ENCODE measurements at regions of chr5 and their contacts with region 1.

Region 1: GRCh38 chr5:87780831-87781760 is 368.4 kb upstream of the CCNH start:
- DNase-seq: peak; percentile 93
- ATAC-seq: peak; percentile 100
- H3K4me3 ChIP-seq: peak overlapping the region; percentile 38; the same call in 1 of the 2 replicates
- H3K27ac ChIP-seq: no peak overlapping the region
- H3K4me1 ChIP-seq: 0 out of 2 replicates have a peak, but pooled peaks cover 4% of the 10 kb centered on the region
- H3K27me3 ChIP-seq: no peaks in the 10 kb centered on the region
- CTCF ChIP-seq: peak; percentile 97

Region 2: DNA sequence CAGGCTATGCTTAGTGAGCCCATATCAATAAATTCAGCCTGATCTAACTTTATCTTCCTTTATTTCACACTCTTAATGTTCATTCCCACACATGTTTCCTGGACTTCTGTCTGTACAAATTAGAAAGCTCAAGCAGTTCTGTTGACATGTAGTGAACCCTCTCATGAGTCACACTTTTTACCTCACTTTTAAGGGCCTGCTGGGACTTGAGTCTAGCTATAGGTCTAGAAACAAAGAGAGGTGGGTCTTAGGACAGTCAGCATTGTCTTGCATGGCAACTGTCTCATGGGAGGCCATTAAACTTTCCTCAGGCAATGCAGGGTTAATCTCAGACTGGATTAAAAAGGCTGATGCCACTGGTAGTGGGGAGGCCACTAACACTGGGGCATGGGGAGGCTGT is 359.8 kb before region 1 on chr5:
- CTCF ChIA-PET with region 1: no interaction called
- POLR2A ChIA-PET with region 1: no interaction called
- intact Hi-C with region 1: loop called (anchors 2 kb)
- DNase-seq: no peak
- ATAC-seq: no peak
- H3K4me3 ChIP-seq: no peak overlapping the region
- H3K27ac ChIP-seq: no peak overlapping the region
- H3K4me1 ChIP-seq: peaks cover 16% of the 10 kb centered on the region
- H3K27me3 ChIP-seq: no peaks in the 10 kb centered on the region
- CTCF ChIP-seq: no peak

Region 3: GRCh38 chr5:87526131-87526530 is 255.0 kb before region 1 on chr5:
- CTCF ChIA-PET with region 1: no interaction called
- POLR2A ChIA-PET with region 1: no interaction called
- intact Hi-C with region 1: no loop called
- DNase-seq: no peak
- ATAC-seq: no peak
- H3K4me3 ChIP-seq: no peak overlapping the region
- H3K27ac ChIP-seq: no peak overlapping the region
- H3K4me1 ChIP-seq: no peaks in the 10 kb centered on the region
- H3K27me3 ChIP-seq: no peaks in the 10 kb centered on the region
- CTCF ChIP-seq: no peak

Region 4: DNA sequence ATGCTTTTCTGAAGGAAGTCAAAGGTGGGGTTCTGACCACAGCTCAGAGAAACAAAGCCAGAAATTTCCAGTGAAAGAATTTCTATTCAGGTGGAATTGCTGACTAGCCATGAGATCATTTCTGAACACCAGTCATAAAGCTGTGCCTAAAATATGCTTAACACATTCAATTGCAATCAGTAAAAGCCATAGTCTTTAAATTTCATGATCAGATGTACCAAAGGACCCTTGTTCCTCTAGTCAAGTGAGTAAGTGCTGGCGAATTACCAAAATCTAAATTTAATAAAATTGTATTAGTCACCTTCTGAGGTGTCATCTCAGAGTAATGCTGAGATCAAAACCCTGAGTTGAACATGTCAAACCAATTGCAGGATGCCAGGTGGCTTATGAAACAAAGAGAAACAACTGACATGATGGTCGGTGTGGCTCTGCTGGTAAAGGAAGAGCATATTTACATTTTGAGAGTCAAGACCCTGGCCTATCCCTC is 34.2 kb before region 1 on chr5:
- CTCF ChIA-PET with region 1: no interaction called
- POLR2A ChIA-PET with region 1: no interaction called
- intact Hi-C with region 1: no loop called
- DNase-seq: peak; percentile 100
- ATAC-seq: peak; percentile 86
- H3K4me3 ChIP-seq: no peak overlapping the region; the same call in 1 of the 2 replicates
- H3K27ac ChIP-seq: peak overlapping the region; percentile 78
- H3K4me1 ChIP-seq: peaks cover 39% of the 10 kb centered on the region
- H3K27me3 ChIP-seq: no peaks in the 10 kb centered on the region
- CTCF ChIP-seq: no peak

Region 5: GRCh38 chr5:87844447-87844846 is 63.4 kb after region 1 on chr5:
- CTCF ChIA-PET with region 1: interaction called, 3 read pairs
- POLR2A ChIA-PET with region 1: no interaction called
- intact Hi-C with region 1: loop called (anchors 1 kb)
- DNase-seq: peak; percentile 31
- ATAC-seq: peak; percentile 59
- H3K4me3 ChIP-seq: no peak overlapping the region
- H3K27ac ChIP-seq: no peak overlapping the region
- H3K4me1 ChIP-seq: peaks cover 11% of the 10 kb centered on the region; the same call in 1 of the 2 replicates
- H3K27me3 ChIP-seq: no peaks in the 10 kb centered on the region
- CTCF ChIP-seq: peak; percentile 68

Region 6: DNA sequence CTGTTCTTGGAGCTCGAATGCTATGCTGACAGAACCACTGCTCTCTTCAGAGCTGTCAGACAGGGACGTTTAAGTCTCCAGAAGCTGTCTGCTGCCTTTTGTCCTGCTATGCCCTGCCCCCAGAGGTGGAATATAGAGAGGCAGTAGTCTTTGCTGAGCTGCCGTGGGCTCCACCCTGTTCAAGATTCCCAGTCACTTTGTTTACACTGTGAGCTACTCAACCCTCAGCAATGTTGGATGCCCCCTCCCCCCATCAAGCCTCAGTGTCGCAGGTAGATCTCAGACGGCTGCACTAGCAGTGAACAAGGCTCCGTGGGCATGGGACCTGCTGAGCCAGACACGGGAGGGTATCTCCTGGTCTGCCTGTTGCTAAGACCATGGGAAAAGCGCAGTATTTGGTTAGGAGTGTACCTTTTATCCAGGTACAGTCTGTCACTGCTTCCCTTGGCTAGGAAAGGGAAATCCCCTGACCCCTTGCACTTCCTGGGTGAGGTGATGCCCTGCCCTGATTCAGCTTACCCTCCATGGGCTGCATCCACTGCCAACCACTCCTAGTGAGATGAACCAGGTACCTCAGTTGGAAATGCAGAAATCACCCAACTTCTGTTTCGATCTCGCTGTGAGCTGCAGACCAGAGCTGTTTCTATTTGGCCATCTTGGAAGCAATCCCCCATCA is 143.5 kb after region 1 on chr5:
- CTCF ChIA-PET with region 1: interaction called, 6 read pairs
- POLR2A ChIA-PET with region 1: no interaction called
- intact Hi-C with region 1: loop called (anchors 1 kb)
- DNase-seq: peak; percentile 95
- ATAC-seq: peak; percentile 100
- H3K4me3 ChIP-seq: peak overlapping the region; percentile 30; the same call in 1 of the 2 replicates
- H3K27ac ChIP-seq: peak overlapping the region; percentile 48
- H3K4me1 ChIP-seq: peaks cover 15% of the 10 kb centered on the region
- H3K27me3 ChIP-seq: no peaks in the 10 kb centered on the region
- CTCF ChIP-seq: peak; percentile 42

Region 7: DNA sequence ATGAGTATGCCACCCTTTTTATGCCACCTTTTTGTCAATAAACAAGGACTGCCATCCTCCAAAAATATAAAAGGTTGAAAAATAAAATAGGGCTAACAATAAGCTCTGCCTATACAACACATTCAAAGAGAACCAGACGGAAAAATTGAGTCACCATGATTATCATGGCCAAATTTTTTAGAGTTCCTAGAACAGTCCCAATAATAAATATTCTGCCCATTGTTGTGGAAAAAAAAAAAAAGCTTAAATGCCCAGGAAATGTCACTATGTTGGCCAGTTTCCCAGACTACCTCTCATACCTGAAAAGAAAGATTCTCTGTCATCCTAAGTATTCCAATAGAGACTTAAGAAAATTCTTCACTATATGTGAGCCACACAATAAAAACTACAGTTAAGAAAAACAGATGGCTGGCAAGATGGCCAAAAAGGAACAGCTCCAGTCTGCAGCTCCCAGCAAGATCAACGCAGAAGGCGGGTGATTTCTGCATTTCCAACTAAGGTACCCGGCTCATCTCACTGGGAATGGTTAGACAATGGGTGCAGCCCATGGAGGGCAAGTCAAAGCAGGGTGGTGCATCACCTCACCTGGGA is 338.5 kb after region 1 on chr5:
- CTCF ChIA-PET with region 1: no interaction called
- POLR2A ChIA-PET with region 1: no interaction called
- intact Hi-C with region 1: loop called (anchors 5 kb)
- DNase-seq: peak; percentile 84
- ATAC-seq: no peak
- H3K4me3 ChIP-seq: no peak overlapping the region
- H3K27ac ChIP-seq: no peak overlapping the region
- H3K4me1 ChIP-seq: peaks cover 28% of the 10 kb centered on the region
- H3K27me3 ChIP-seq: no peaks in the 10 kb centered on the region
- CTCF ChIP-seq: no peak

Region 8: GRCh38 chr5:88268385-88269184 is 487.5 kb after region 1 on chr5 and contains the start of gene TMEM161B:
- CTCF ChIA-PET with region 1: no interaction called
- POLR2A ChIA-PET with region 1: no interaction called
- intact Hi-C with region 1: loop called (anchors 10 kb)
- DNase-seq: peak; percentile 93
- ATAC-seq: peak; percentile 98
- H3K4me3 ChIP-seq: peak within 1 kb of the TSS; percentile 96
- H3K27ac ChIP-seq: peak within 1 kb of the TSS; percentile 28; the same call in 1 of the 2 replicates
- H3K4me1 ChIP-seq: peaks cover 33% of the 10 kb centered on the region
- H3K27me3 ChIP-seq: no peaks in the 10 kb centered on the region
- CTCF ChIP-seq: no peak
- total RNA-seq, gene TMEM161B: 11.5 and 12.2 TPM in 2 replicates

Region 9: DNA sequence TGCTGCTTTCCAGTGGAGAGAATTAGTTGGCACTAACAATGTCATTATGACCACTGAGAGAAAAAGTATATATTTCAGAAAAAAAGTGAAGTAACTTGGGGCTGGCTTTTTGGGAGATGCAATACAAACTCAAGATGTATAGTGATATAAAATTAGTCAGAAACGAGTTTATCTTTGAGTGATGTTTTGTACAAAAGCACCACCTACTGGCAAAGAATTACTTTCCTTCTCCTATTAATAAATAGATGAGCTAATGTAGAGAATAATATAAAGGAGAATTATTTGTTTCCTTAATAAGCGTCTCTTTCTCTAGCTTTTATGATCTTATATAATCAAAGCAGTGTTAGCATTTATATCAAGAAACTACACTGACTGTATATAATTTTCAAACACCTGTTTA is 943.1 kb after region 1 on chr5:
- CTCF ChIA-PET with region 1: interaction called, 15 read pairs
- POLR2A ChIA-PET with region 1: no interaction called
- intact Hi-C with region 1: loop called (anchors 1 kb)
- DNase-seq: peak; percentile 68
- ATAC-seq: peak; percentile 34
- H3K4me3 ChIP-seq: no peak overlapping the region
- H3K27ac ChIP-seq: no peak overlapping the region
- H3K4me1 ChIP-seq: peaks cover 8% of the 10 kb centered on the region
- H3K27me3 ChIP-seq: no peaks in the 10 kb centered on the region
- CTCF ChIP-seq: peak; percentile 75